ENCODE measurements at regions of chr12 and their contacts with region 1.

Region 1: GRCh38 chr12:694734-695503 is 31.7 kb upstream of the NINJ2 start:
- DNase-seq: no peak
- H3K4me3 ChIP-seq: no peak overlapping the region
- H3K27ac ChIP-seq: no peak overlapping the region
- H3K4me1 ChIP-seq: no peaks in the 10 kb centered on the region
- H3K27me3 ChIP-seq: no peaks in the 10 kb centered on the region
- CTCF ChIP-seq: no peak
- EP300 ChIP-seq: no peak
- POLR2A ChIP-seq: no peak

Region 2: DNA sequence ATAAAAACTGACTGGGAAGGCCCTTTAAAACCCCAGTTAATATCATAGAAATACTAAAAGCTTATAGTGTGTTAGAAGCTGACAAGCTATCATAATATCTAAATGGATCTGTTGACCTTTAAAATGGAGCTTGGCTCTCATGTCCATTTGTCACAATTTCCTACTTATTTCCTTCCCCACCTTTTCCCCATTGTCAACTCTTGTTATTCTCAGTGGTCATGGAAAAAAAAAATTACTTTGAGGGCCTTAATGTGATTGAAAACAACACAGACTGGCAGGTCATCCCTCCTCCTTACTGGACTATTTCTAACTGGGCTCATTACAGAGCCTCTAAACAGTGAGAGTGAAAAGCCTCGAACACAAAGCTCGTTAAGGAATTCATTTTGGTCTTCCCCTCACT is 43.8 kb after region 1 on chr12:
- in situ Hi-C with region 1: no loop called
- intact Hi-C with region 1: loop called (anchors 1 kb)
- DNase-seq: no peak
- H3K4me3 ChIP-seq: no peak overlapping the region
- H3K27ac ChIP-seq: no peak overlapping the region
- H3K4me1 ChIP-seq: no peaks in the 10 kb centered on the region
- H3K27me3 ChIP-seq: no peaks in the 10 kb centered on the region
- CTCF ChIP-seq: no peak
- EP300 ChIP-seq: no peak
- POLR2A ChIP-seq: no peak